A673 (cell line): ENCODE measurements at regions of chr14 and their contacts with region 1.

Region 1: DNA sequence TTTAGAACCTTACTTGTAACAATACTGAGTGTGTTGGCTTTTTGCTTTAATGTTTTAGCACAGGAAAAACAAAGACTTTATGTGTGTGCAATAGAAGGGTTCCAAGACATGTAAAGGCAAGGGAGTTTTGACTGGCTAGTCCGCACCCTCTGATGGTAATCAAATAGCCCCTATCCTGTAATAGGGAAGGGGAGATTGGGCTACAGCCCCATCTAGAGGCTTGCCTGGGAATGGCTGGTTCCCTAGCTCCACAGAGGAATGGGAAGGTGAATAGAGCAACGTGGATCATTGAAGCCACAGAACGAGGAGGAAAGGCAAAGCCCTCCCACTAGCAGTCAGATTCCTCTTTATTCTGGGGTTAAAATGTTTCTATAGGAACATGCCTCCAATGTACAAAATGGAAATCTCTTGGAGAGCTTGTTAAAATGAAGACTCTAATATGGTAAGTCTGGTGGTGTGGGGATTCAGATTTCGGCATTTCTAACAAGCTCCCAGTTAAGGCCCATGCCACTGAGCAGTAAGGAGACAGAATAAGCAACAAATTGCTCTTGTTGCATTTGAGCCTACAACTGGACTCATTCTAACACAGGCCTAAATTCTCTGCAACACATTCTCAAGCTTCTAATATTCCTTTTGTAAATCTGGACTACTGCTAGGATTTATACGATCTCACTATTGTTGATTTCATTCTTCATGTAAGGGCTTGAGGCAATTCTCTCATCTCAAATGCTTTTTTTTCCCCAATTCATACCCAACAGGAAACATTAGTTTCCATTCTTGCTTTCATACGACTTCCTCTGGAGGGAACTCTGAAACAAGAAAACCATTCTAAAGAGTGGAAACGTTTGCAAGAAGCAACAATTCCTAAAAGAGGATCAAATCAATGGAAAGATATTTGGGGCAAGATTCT is 57.1 kb downstream of the NIN start:
- DNase-seq: peak; percentile 71
- H3K4me3 ChIP-seq: no peak overlapping the region
- H3K27ac ChIP-seq: no peak overlapping the region
- H3K4me1 ChIP-seq: peaks cover 5% of the 10 kb centered on the region
- H3K27me3 ChIP-seq: no peaks in the 10 kb centered on the region
- CTCF ChIP-seq: peak; percentile 95

Region 2: GRCh38 chr14:50321009-50321660 is 452.8 kb before region 1 on chr14:
- CTCF ChIA-PET with region 1: no interaction called
- POLR2A ChIA-PET with region 1: no interaction called
- intact Hi-C with region 1: loop called (anchors 5 kb)
- DNase-seq: peak; percentile 93
- H3K4me3 ChIP-seq: peak overlapping the region; percentile 34
- H3K27ac ChIP-seq: peak overlapping the region; percentile 60
- H3K4me1 ChIP-seq: no peaks in the 10 kb centered on the region
- H3K27me3 ChIP-seq: no peaks in the 10 kb centered on the region
- CTCF ChIP-seq: peak; percentile 98

Region 3: DNA sequence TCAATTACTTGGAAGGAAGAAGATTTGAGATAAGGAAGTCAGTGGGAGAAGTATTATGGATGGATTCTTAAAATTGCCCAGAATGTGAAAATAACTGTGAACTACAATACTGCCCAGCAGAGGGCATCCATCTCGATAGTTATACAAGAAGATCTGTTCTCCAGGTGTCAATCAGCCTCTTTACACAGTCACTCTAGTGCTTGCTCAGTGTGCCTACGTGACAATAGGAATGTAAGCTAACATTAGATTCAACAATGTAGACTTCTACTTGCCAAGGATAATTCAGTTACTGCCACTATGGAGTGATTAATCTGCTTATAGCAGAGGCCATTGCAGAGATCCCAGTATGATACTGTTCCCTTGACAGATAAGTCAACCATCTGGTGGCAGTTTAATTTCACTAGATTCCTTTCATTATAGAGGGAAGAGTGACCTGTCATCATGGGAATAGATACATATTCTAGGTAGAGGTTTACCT is 230.9 kb before region 1 on chr14:
- CTCF ChIA-PET with region 1: interaction called, 14 read pairs
- POLR2A ChIA-PET with region 1: no interaction called
- intact Hi-C with region 1: loop called (anchors 1 kb)
- DNase-seq: peak; percentile 67
- H3K4me3 ChIP-seq: no peak overlapping the region
- H3K27ac ChIP-seq: no peak overlapping the region
- H3K4me1 ChIP-seq: no peaks in the 10 kb centered on the region
- H3K27me3 ChIP-seq: no peaks in the 10 kb centered on the region
- CTCF ChIP-seq: peak; percentile 74

Region 4: GRCh38 chr14:50599700-50600444 is 174.0 kb before region 1 on chr14:
- CTCF ChIA-PET with region 1: interaction called, 4 read pairs
- POLR2A ChIA-PET with region 1: no interaction called
- intact Hi-C with region 1: loop called (anchors 1 kb)
- DNase-seq: peak; percentile 68
- H3K4me3 ChIP-seq: no peak overlapping the region
- H3K27ac ChIP-seq: no peak overlapping the region
- H3K4me1 ChIP-seq: no peaks in the 10 kb centered on the region
- H3K27me3 ChIP-seq: no peaks in the 10 kb centered on the region
- CTCF ChIP-seq: peak; percentile 80

Region 5: DNA sequence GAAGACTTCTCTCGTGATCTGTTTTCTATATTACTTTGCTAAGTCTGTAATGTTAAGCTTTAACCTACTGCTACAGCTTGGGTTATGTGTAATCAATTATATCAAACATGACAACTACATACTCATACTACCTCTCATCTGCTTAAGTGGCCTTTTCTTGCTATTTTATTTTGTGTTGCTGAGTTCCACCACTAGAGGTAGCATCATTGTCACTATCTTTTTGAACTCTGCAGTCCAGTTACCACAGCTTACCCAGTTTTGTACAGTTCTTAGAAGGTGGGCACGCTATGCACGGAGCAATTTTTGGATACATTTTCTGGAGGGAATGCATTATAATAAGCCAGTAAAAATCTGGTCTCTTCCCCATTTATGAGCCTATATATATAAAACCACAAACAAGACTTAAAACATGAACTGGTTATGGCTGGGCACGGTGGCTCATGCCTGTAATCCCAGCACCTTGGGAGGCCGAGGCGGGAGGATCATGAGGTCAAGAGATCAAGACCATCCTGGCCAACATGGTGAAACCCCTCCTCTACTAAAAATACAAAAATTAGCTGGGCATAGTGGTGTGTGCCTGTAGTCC is 154.2 kb before region 1 on chr14:
- CTCF ChIA-PET with region 1: no interaction called
- POLR2A ChIA-PET with region 1: no interaction called
- intact Hi-C with region 1: loop called (anchors 5 kb)
- DNase-seq: peak; percentile 62
- H3K4me3 ChIP-seq: no peak overlapping the region
- H3K27ac ChIP-seq: no peak overlapping the region
- H3K4me1 ChIP-seq: peaks cover 7% of the 10 kb centered on the region
- H3K27me3 ChIP-seq: no peaks in the 10 kb centered on the region
- CTCF ChIP-seq: peak; percentile 74

Region 6: DNA sequence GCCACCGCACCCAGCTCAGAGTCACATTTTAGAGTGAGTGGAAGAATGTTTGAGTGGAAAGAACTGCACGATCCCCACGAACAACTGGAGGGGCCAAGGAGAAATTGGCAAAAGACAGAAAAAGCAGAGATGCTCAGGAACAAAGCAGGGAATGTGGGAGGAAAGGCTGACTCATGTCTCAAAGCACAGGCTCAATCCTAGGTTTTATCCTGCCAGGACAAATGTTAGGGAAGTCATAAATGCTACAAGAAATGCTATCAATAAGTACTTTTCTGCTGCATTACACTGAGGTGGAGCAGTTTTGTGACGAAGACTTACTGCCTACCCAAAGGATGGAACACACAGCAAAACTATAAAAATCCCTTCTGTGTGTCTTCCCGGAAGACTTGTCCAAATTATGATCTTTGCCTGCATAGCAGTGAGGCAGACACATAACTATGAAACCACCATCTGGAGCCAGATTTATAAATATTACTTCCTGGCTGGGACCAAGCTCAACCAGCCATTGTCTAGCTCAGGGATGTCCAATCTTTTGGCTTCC is 30.4 kb after region 1 on chr14:
- CTCF ChIA-PET with region 1: no interaction called
- POLR2A ChIA-PET with region 1: no interaction called
- intact Hi-C with region 1: no loop called
- DNase-seq: no peak
- H3K4me3 ChIP-seq: no peak overlapping the region
- H3K27ac ChIP-seq: no peak overlapping the region
- H3K4me1 ChIP-seq: peaks cover 22% of the 10 kb centered on the region
- H3K27me3 ChIP-seq: no peaks in the 10 kb centered on the region
- CTCF ChIP-seq: no peak